Activated CD4-positive, alpha-beta T cell treated with anti-CD3 and anti-CD28 coated beads, Interleukin-2, amount 10 ng/mL, durations not matched to agents 24 days and 14 days (primary cell): ENCODE measurements at regions of chr9 and their contacts with region 1.

Region 1: DNA sequence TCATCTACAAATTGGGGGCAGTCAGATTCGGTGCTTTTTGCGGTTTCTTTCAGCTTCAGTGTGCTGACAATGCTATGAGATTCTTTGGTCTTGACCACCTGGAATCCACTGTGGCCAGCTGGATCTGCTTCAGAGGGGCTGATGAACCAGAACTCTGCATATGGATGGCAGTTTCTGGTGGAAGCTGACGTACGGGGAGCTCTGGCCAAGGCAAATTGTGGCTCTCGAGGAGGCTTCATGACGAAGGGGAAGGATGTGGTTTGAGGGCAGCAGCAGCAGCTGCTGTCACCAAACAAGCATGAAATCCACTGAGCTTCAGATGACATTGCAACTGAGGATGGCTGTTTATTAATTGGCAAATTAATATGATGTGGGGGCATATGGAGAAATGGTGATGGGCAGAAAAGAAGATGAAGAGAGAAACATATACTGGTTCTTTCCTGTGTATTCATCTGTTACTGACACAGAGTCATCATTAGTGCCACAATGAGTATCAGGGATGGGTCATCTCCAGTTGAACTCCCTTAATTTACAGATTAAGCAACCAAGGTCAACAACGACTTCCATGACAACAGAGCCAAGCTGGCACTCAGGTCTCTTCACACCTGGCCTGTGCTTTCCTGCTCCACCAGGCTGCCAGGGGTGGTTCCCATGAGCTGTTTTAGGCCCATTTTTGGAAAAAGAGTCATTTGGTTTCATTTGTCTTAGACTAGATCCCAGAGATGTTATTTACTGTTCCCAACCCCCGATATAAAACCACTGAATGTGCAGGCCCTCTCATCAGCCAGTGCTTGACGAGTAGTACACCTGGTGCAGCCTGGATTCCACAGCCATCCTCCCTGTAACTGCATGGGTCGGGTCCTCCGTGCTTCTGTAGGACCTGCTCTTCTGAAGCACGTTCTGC is 134.7 kb downstream of the AOPEP start:
- DNase-seq: peak; percentile 93
- H3K4me3 Mint-ChIP-seq: peak overlapping the region; percentile 74
- H3K27ac Mint-ChIP-seq: peak overlapping the region; percentile 86
- H3K4me1 Mint-ChIP-seq: peaks cover 48% of the 10 kb centered on the region
- H3K27me3 Mint-ChIP-seq: peaks cover 3% of the 10 kb centered on the region

Region 2: GRCh38 chr9:94812343-94812742 is 48.9 kb before region 1 on chr9:
- intact Hi-C with region 1: no loop called
- DNase-seq: no peak
- H3K4me3 Mint-ChIP-seq: no peak overlapping the region
- H3K27ac Mint-ChIP-seq: peak overlapping the region; percentile 52
- H3K4me1 Mint-ChIP-seq: peaks cover 3% of the 10 kb centered on the region
- H3K27me3 Mint-ChIP-seq: no peaks in the 10 kb centered on the region

Region 3: GRCh38 chr9:94839398-94839797 is 21.8 kb before region 1 on chr9:
- intact Hi-C with region 1: loop called (anchors 1 kb)
- DNase-seq: no peak
- H3K4me3 Mint-ChIP-seq: no peak overlapping the region
- H3K27ac Mint-ChIP-seq: peak overlapping the region; percentile 49
- H3K4me1 Mint-ChIP-seq: peaks cover 24% of the 10 kb centered on the region
- H3K27me3 Mint-ChIP-seq: no peaks in the 10 kb centered on the region

Region 4: DNA sequence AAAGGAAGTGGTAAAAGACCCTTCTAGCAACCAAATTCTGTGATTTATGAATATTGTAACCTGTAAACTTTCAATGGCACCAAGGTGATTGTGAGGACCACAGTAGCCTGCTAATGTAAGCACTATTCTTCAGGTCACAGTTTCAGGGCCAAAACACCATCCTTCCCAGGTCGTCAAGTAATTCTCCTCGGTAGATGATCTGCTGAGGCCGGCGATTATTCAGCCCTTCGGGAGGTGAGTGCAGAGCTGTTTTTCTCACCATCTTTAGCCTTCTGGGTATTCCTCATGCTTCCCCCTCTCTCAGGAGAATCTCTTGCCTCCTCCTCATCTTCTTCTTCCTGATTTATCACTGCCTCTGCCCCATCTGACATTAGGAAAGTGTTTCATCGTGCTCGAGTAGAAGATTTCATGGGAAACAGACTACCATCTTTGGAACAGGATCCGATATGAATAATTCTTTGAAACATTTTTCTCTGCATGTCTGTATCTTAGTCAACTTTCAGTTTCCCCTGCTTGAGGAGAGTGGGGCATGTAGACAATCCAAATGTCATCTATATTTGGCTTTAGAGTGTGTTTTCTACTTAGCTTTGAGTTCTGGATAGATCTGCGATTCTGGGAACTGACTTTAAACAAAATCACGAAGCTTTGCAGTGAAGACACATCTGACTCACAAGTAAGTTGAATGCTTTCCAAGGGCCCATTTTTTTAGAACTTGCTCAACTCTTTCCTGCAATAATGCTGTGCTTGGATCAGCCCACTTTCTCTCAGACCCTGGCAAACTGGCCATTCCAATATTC is 39.2 kb after region 1 on chr9:
- intact Hi-C with region 1: loop called (anchors 5 kb)
- DNase-seq: no peak
- H3K4me3 Mint-ChIP-seq: peak overlapping the region; percentile 36
- H3K27ac Mint-ChIP-seq: peak overlapping the region; percentile 83
- H3K4me1 Mint-ChIP-seq: peaks cover 27% of the 10 kb centered on the region
- H3K27me3 Mint-ChIP-seq: no peaks in the 10 kb centered on the region